Endothelial cell of umbilical vein (primary cell): ENCODE measurements at regions of chr4 and their contacts with region 1.

Region 1: DNA sequence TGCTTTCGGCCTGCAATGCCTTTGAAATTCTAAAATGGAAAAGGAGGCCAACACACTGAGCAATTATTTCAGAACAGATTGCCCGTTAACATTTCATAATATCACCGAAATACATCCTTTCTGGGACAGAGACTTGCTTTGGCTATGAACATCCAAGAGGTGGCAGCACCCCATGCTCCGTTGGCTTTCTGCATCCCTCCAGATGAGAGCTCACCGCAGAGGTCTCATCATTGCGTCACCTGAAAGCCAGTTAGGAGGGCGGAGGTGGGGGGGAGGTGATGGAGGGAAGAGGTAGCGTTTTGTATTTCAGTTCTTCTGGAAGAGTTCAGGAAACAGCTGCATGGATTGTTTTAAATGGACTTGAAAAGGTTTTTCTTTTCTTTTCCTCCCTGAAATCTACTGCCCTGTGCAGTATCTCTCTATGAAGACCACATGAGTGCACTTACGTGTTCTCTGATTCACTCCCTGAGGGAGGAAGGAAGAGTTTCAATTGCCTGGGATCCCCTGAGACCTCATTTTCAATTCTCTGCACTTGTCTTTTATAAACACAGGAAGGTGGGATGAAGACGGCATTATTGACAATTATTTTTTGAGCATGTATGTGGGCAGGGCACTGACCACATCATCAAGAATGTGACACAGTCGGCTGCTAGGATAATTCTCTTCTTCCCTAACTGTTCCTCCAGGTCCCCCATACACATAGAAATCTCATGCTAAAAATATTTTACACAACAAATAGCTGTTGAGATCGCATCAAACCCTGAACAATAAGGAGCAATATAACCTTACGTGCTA is 166.9 kb upstream of the PGRMC2 start:
- DNase-seq: peak; percentile 92
- H3K4me3 ChIP-seq: no peak overlapping the region
- H3K27ac ChIP-seq: peak overlapping the region; percentile 55
- H3K4me1 ChIP-seq: peaks cover 17% of the 10 kb centered on the region
- H3K27me3 ChIP-seq: no peaks in the 10 kb centered on the region
- CTCF ChIP-seq: peak; percentile 79 to 90
- POLR2A ChIP-seq: no peak

Region 2: DNA sequence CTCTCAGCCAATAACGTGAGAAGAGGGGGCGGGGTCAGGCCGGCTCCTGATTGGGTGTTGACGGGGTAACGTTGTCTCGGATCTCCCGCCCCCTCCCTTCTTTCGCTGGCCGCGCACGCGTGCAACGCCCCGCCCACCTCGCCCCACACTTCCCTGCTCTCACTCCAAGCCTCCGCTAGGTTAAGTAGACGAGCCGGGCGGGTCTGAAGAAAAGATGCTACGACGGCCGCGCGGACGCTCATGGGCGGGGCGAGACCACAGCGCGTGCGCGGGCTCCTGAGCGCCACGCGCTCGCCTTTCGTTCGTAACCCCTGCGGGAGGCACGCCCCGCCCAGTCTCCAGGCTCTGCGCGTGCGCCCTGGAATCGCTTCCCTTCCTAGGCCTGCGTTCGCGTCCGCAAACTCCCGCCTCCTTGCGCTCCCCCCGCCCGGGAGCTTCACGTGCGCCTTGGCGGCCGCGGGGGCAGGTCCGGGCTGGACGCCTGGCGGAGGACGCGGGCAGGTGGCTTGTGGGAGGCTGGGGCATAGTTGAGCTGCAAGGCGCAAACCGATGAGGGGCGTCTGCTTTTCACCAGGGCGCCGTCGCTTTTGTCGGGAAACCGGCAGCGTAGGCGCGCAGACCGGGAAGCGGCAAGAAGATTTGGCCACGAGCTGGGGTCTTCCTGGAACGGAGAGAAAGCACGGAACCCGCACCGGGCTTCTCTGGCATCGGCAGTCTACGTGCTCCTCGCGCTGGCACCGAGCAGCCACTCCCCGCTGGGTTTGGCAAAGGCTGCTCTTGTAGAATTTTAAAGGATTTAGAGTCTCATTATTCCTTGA is 166.4 kb before region 1 on chr4:
- CTCF ChIA-PET with region 1: interaction called, 7 read pairs
- POLR2A ChIA-PET with region 1: no interaction called
- dilution Hi-C with region 1: no loop called
- intact Hi-C with region 1: loop called (anchors 2 kb)
- DNase-seq: peak; percentile 100
- H3K4me3 ChIP-seq: peak overlapping the region; percentile 66 to 84 (median 73)
- H3K27ac ChIP-seq: peak overlapping the region; percentile 83
- H3K4me1 ChIP-seq: peaks cover 23% of the 10 kb centered on the region
- H3K27me3 ChIP-seq: no peaks in the 10 kb centered on the region
- CTCF ChIP-seq: peak in 1 of 2 donors; percentile 26
- POLR2A ChIP-seq: peak; percentile 80

Region 3: DNA sequence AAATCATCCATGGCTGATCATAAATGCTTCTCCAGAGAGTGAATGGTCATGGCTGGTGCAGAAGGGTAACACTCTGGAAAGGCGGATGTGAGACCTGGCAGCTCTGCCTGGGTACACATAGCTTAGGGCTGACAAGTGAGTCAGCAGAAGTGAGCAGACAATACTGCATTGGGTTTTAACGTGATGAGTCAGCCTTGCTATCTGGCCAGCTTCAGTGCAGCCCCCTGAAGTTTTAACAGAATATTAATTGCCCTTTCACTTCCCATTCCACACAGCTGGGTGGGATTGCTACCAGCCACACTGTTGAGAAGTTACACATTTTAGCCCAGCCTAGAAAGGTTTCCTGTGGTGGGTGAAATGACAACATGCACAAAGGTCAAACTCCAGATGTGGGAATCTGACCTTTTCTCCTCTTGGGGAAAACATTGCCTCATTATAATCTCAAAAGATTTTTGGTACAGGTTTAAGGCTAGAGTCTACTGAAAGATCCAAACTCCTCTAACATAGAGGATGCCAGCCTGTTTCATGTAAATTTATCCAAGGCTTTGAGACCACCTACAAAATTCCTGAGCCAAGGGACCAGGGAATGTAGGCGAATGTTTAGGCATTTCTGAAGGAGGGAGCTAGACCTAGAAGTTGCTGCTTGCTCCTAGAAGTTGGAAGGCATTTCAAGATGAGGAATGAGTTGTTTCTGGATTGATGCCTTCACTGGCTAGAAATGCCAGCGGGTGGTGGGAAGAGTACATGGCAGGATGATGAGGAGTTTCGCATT is 63.4 kb after region 1 on chr4:
- CTCF ChIA-PET with region 1: interaction called, 23 read pairs
- POLR2A ChIA-PET with region 1: interaction called, 3 read pairs
- dilution Hi-C with region 1: no loop called
- intact Hi-C with region 1: loop called (anchors 1 kb)
- DNase-seq: peak; percentile 97
- H3K4me3 ChIP-seq: no peak overlapping the region
- H3K27ac ChIP-seq: peak overlapping the region; percentile 92
- H3K4me1 ChIP-seq: peaks cover 58% of the 10 kb centered on the region
- H3K27me3 ChIP-seq: no peaks in the 10 kb centered on the region
- CTCF ChIP-seq: no peak
- POLR2A ChIP-seq: no peak

Region 4: DNA sequence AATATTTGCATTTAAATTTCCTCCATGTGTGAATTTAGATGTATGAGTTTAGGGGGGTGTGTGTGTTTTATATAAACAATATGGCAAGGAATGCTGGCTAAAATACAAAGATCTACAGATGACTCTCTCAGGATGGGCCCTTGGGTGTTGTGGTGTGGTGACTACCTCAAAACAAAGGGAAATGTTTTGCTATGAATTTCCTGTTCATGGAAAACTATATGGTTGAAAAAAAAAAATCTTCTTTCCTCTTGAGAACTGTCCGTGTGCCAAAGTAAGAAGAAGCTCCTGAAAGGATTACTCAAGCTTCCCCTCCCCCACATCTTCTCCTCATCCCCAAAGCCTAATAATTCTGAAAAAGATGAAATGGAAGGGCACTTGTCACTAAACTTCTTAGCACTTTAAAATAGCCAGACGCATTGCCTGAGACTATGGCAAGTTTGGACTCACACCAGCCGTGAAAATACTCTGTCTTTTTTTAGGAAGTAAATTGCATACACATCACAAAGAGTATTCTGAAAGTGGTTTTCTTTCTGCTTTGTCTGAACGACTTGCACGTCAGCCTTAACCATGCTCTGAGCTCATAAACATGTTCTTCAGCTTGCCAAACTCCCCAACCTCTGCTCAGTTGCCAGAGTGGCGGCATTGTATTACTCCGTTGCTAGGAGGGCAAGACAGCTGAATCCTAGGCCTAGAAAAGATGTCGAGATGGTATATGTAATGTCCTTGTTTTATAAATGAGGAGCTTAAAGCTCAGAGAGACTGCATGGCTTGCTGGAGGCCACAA is 104.6 kb after region 1 on chr4:
- CTCF ChIA-PET with region 1: interaction called, 60 read pairs
- POLR2A ChIA-PET with region 1: interaction called, 9 read pairs
- dilution Hi-C with region 1: no loop called
- intact Hi-C with region 1: no loop called
- DNase-seq: peak; percentile 50
- H3K4me3 ChIP-seq: no peak overlapping the region
- H3K27ac ChIP-seq: no peak overlapping the region
- H3K4me1 ChIP-seq: peaks cover 17% of the 10 kb centered on the region
- H3K27me3 ChIP-seq: no peaks in the 10 kb centered on the region
- CTCF ChIP-seq: no peak
- POLR2A ChIP-seq: no peak

Region 5: GRCh38 chr4:128600996-128601871 is 146.8 kb after region 1 on chr4:
- CTCF ChIA-PET with region 1: interaction called, 12 read pairs
- POLR2A ChIA-PET with region 1: no interaction called
- dilution Hi-C with region 1: no loop called
- intact Hi-C with region 1: no loop called
- DNase-seq: peak; percentile 97
- H3K4me3 ChIP-seq: no peak overlapping the region
- H3K27ac ChIP-seq: peak overlapping the region; percentile 60
- H3K4me1 ChIP-seq: peaks cover 27% of the 10 kb centered on the region
- H3K27me3 ChIP-seq: no peaks in the 10 kb centered on the region
- CTCF ChIP-seq: no peak
- POLR2A ChIP-seq: no peak

Region 6: GRCh38 chr4:128854433-128854832 is 400.0 kb after region 1 on chr4:
- CTCF ChIA-PET with region 1: interaction called, 12 read pairs
- POLR2A ChIA-PET with region 1: no interaction called
- dilution Hi-C with region 1: no loop called
- intact Hi-C with region 1: no loop called
- DNase-seq: peak; percentile 29
- H3K4me3 ChIP-seq: no peak overlapping the region
- H3K27ac ChIP-seq: no peak overlapping the region
- H3K4me1 ChIP-seq: no peaks in the 10 kb centered on the region
- H3K27me3 ChIP-seq: no peaks in the 10 kb centered on the region
- CTCF ChIP-seq: no peak
- POLR2A ChIP-seq: no peak

Region 7: GRCh38 chr4:129481107-129481506 is 1026.6 kb after region 1 on chr4:
- CTCF ChIA-PET with region 1: no interaction called
- POLR2A ChIA-PET with region 1: no interaction called
- dilution Hi-C with region 1: no loop called
- intact Hi-C with region 1: no loop called
- DNase-seq: no peak
- H3K4me3 ChIP-seq: no peak overlapping the region
- H3K27ac ChIP-seq: no peak overlapping the region
- H3K4me1 ChIP-seq: no peaks in the 10 kb centered on the region
- H3K27me3 ChIP-seq: no peaks in the 10 kb centered on the region
- CTCF ChIP-seq: no peak
- POLR2A ChIP-seq: no peak